ENCODE measurements at regions of chr14 and their contacts with region 1.

Region 1: DNA sequence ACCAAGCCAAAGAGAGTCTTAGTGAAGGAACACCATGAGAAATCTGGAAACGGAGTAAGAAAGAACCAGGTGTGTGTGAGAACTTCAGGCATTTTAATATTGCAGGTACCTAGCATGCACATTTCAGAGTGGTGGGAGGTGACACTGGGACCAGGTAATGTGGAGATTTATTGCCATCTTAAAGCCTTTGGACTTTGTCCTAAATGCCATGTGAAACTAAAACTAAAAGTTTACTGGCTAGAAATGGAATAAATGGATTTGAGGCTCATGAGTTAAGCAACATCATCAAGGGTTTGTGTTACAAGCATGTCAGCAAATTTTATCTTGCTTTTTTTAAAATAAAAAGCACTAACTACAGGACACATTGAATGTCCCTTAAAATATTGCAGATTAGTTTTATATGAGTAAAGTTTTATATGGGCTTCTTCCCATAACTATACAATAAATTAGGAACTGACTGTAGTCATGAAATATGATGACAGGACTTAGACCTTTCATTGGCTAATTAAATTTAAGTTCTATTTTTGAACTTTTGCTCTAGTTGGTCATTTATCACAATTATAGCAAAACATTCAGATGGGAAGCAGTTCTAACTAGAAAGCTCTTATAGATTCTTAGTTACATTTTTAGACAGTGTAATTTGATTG is 721.1 kb upstream of the NOVA1 start:
- DNase-seq: no peak

Region 2: GRCh38 chr14:27305441-27305945 is 13.4 kb before region 1 on chr14:
- intact Hi-C with region 1: loop called in 1 of 2 experiments (anchors 2 kb)
- DNase-seq: no peak